Mammary epithelial cell (primary cell): ENCODE measurements at regions of chr6 and their contacts with region 1.

Region 1: DNA sequence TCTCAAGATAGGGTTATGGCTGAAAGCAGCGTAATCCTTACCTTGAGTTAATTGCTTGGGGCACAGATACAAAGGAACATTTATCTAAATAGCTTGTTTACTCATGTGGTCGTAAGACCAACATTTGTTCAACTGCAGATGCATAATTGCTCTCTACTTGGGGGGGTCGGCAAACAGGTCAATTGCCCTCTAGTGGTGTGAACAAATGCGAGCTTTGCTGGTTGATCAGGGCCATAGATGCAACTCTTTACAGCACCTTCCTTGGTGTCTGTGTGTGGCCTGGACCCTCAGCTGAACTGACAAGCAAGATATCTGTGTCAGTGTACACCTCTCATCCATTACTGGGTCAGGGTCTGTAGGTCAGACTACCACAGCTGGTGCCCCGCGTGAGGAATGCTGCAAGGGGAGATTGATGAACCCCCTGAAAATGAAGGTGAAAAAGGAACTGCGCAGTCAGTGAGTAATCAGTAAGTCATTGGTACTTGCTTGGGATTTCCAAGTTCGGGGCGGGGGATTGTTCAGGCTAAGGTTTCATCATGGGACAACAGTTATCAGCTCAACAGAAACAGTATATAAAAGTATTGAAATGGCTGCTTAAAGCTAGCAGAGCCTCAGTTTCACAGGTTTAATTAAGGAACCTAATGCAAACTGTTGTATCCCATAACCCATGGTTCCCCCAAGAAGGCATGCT is 24.0 kb downstream of the HLA-DPA1 start:
- DNase-seq: no peak
- H3K4me3 ChIP-seq: no peak overlapping the region
- H3K27ac ChIP-seq: no peak overlapping the region
- H3K4me1 ChIP-seq: no peaks in the 10 kb centered on the region
- H3K27me3 ChIP-seq: peaks cover 2% of the 10 kb centered on the region
- CTCF ChIP-seq: no peak

Region 2: GRCh38 chr6:32912951-32913350 is 136.5 kb before region 1 on chr6:
- CTCF ChIA-PET with region 1: no interaction called
- dilution Hi-C with region 1: loop called (anchors 10 kb)
- in situ Hi-C with region 1: no loop called
- intact Hi-C with region 1: no loop called
- DNase-seq: no peak
- H3K4me3 ChIP-seq: no peak overlapping the region
- H3K27ac ChIP-seq: no peak overlapping the region
- H3K4me1 ChIP-seq: no peaks in the 10 kb centered on the region
- H3K27me3 ChIP-seq: no peaks in the 10 kb centered on the region
- CTCF ChIP-seq: no peak

Region 3: GRCh38 chr6:32984605-32985389 is 64.7 kb before region 1 on chr6:
- CTCF ChIA-PET with region 1: no interaction called
- dilution Hi-C with region 1: no loop called
- in situ Hi-C with region 1: no loop called
- intact Hi-C with region 1: no loop called
- DNase-seq: peak; percentile 60
- H3K4me3 ChIP-seq: no peak overlapping the region
- H3K27ac ChIP-seq: no peak overlapping the region
- H3K4me1 ChIP-seq: no peaks in the 10 kb centered on the region
- H3K27me3 ChIP-seq: no peaks in the 10 kb centered on the region
- CTCF ChIP-seq: peak; percentile 79 to 92